IMR-90 (cell line): ENCODE measurements at regions of chr17 and their contacts with region 1.

Region 1: DNA sequence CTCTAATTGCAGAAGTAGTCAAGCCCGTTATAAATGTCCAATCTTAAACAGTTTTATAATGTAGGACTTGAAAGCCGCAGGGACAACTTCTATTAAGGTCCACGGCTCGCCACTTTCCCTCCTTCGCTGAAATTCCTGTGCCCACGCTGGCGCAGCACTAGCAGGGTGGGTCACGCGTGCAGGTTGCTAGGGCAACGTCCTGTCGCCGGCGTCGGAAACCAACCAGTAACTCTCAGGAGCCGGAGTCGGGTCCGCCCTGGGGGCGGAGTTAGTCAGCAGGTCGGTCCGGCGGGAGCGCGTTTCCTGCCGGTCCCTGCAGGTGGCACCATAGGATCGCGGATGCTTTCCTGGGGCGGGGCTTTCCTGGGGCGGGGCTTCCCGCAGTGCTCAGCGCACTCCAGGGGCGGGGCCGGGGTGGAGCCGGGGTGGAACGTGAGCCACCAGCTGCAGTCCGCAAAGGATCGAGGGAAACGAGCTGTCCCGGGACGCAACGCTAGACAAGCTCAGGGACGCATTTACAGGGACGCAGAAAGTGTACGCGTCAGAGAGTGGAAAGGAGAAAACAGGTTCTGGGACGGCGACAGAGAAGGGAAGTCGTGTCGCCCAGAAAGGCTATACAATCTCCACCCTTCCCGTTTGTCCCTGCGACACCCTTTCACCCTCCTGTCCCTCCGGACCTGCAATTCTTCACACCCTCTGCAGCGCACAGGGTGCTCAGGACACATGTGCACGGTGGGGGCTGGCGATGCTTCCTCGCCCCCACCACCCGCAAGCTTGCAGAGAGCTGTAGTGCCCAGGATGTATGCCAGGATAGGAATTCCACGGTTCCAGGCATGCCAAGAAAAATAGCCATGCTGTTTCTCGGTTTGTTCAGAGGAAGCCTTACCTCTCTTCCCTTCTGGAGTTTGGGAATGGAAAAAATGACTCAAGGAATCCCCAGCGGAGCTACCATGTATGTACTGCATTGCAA is 12.4 kb downstream of the COPZ2 start:
- DNase-seq: peak; percentile 96
- ATAC-seq: peak; percentile 92
- H3K4me3 ChIP-seq: peak overlapping the region; percentile 43
- H3K27ac ChIP-seq: peak overlapping the region; percentile 14; the same call in 1 of the 2 replicates
- H3K4me1 ChIP-seq: peaks cover 18% of the 10 kb centered on the region
- H3K27me3 ChIP-seq: no peaks in the 10 kb centered on the region
- CTCF ChIP-seq: peak; percentile 93
- POLR2A ChIP-seq: no peak
- RAD21 ChIP-seq: peak; percentile 90

Region 2: DNA sequence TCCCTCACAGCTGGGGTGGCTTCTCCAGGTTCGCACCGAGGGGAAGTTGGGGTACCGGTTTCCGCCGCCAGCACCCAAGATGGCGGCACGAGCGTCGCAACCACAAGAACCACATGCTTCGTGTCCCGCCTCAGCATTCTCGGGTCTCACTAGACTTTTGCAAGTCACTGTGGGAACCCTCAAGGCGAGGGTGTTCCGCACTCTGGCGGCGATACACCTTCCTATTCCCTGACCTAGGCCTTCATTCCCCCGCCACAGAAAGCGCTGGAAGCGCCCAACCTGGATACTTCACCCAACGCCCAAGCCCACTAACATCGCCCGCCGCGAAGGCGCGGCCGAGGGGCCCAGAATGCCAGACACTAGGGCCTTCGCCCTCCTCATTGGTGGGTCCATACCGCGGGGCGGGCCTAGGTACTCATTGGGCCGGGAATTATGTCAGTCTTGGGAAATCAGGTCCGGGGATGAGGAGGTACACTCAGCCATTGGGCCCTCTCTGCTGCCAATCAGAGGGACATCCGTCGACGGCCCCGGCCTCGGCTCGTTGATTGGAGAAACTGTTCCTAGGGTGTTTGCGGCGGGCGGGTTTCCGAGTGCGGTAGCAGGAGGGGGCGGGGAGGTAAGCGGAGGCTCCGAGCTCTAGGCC is 22.6 kb after region 1 on chr17 and contains the start of gene NFE2L1:
- CTCF ChIA-PET with region 1: interaction called, 11 read pairs
- POLR2A ChIA-PET with region 1: no interaction called
- dilution Hi-C with region 1: no loop called
- in situ Hi-C with region 1: no loop called
- intact Hi-C with region 1: loop called (anchors 1 kb)
- DNase-seq: peak; percentile 100
- ATAC-seq: peak; percentile 91
- H3K4me3 ChIP-seq: peak within 1 kb of the TSS; percentile 86
- H3K27ac ChIP-seq: peak within 1 kb of the TSS; percentile 98
- H3K4me1 ChIP-seq: peaks cover 24% of the 10 kb centered on the region
- H3K27me3 ChIP-seq: no peaks in the 10 kb centered on the region
- CTCF ChIP-seq: no peak
- POLR2A ChIP-seq: peak; percentile 90
- RAD21 ChIP-seq: no peak
- total RNA-seq, gene NFE2L1: 35.6 and 42.8 TPM in 2 replicates

Region 3: DNA sequence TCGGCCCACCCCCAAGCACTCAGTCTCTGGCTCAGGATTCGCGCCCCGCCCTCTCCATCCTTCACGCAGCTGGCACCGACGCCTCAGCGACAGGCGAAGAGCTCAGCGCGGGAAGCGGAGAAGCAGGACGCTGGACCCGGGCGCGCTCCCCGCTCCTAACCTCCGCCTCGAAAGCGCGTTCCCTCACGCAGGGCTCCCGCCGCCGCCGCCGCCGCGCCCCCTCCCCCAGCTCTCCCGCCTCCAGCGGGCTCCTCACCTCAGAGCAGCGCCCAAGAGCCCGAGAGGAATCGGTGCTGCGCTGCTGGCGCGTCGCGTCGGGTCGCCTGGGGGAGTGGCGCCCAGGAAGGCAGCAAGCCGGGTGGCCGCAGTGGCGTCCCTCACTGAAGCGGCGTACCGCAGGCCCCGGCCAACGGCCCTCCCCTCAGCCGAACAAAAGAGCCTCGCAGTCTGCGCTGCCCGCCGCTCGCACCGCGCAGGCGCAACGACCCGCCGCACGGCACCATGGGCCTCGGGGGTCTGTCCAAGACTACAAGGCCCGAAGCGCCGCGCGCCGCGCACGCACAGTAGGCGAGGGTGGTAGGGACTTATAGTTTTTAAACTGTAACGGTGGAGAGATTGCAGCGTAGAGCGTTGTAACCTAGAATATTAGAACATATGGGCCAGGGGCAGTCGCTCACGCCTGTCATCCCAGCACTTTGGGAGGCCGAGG is 75.9 kb after region 1 on chr17 and contains the start of gene CBX1:
- CTCF ChIA-PET with region 1: no interaction called
- POLR2A ChIA-PET with region 1: interaction called, 5 read pairs
- dilution Hi-C with region 1: no loop called
- in situ Hi-C with region 1: no loop called
- intact Hi-C with region 1: loop called (anchors 2 kb)
- DNase-seq: peak; percentile 94
- ATAC-seq: peak; percentile 96
- H3K4me3 ChIP-seq: peak within 1 kb of the TSS; percentile 90
- H3K27ac ChIP-seq: peak within 1 kb of the TSS; percentile 88
- H3K4me1 ChIP-seq: peaks cover 2% of the 10 kb centered on the region; the same call in 1 of the 2 replicates
- H3K27me3 ChIP-seq: no peaks in the 10 kb centered on the region
- CTCF ChIP-seq: no peak
- POLR2A ChIP-seq: no peak
- RAD21 ChIP-seq: no peak
- total RNA-seq, gene CBX1: 35.0 and 52.2 TPM in 2 replicates

Region 4: GRCh38 chr17:48194097-48194550 is 168.9 kb after region 1 on chr17:
- CTCF ChIA-PET with region 1: no interaction called
- POLR2A ChIA-PET with region 1: no interaction called
- dilution Hi-C with region 1: no loop called
- in situ Hi-C with region 1: no loop called
- intact Hi-C with region 1: no loop called
- DNase-seq: peak; percentile 47
- ATAC-seq: no peak
- H3K4me3 ChIP-seq: no peak overlapping the region
- H3K27ac ChIP-seq: no peak overlapping the region
- H3K4me1 ChIP-seq: no peaks in the 10 kb centered on the region
- H3K27me3 ChIP-seq: peaks cover 29% of the 10 kb centered on the region
- CTCF ChIP-seq: no peak
- POLR2A ChIP-seq: no peak
- RAD21 ChIP-seq: no peak

Region 5: DNA sequence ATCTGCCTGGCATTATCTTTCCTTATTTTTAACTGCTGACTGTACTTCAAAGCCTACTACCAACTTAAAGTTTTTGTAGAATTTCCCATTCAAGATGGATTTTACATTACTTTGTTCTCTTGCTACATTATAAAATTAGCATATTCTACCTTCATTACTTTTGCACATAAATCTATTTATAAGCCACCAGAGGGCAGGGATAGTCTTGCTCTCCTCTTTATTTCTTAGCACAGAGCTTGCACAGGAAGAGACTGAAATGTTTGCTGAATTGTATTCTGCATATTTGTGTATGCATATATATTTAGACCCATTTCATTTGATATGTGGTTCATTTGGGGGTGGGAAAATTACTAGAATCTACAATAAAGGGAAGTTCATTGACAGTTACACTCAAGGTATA is 296.8 kb after region 1 on chr17:
- CTCF ChIA-PET with region 1: no interaction called
- POLR2A ChIA-PET with region 1: no interaction called
- dilution Hi-C with region 1: no loop called
- in situ Hi-C with region 1: no loop called
- intact Hi-C with region 1: no loop called
- DNase-seq: peak; percentile 29
- ATAC-seq: no peak
- H3K4me3 ChIP-seq: no peak overlapping the region
- H3K27ac ChIP-seq: no peak overlapping the region
- H3K4me1 ChIP-seq: no peaks in the 10 kb centered on the region
- H3K27me3 ChIP-seq: peaks cover 39% of the 10 kb centered on the region
- CTCF ChIP-seq: peak; percentile 28
- POLR2A ChIP-seq: no peak
- RAD21 ChIP-seq: peak; percentile 36

Region 6: DNA sequence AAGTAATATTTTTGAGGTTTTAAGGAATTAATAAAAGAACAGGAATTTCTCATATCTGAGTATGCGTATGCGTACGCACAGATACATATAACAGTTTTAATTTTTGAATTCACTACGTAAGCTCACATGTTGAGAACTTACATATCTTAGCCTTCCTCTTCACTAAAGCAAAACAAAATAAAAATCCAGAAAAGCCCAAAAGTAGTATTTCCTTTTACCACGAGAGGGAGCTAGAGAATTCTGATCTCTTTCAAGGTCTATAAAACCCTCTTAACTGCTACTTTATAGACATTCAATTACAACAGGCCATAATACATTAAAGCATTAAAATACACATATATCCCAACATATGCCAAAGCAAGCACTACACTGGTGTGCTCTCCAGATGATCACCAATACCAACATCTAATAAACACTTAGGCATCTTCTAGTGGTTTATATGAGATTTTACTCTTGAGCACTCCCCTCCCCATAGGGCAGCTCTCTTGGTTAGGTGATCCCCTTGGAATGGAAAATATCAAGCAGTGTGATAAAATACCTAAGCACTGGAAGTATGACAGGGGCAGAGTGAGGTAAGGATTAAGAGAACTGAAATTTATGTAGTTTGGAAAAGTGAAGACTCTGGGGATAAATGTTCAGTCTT is 310.8 kb after region 1 on chr17:
- CTCF ChIA-PET with region 1: no interaction called
- POLR2A ChIA-PET with region 1: no interaction called
- dilution Hi-C with region 1: no loop called
- in situ Hi-C with region 1: no loop called
- intact Hi-C with region 1: loop called (anchors 10 kb)
- DNase-seq: peak; percentile 71
- ATAC-seq: peak; percentile 74
- H3K4me3 ChIP-seq: no peak overlapping the region
- H3K27ac ChIP-seq: no peak overlapping the region
- H3K4me1 ChIP-seq: 0 out of 2 replicates have a peak, but pooled peaks cover 1% of the 10 kb centered on the region
- H3K27me3 ChIP-seq: peaks cover 40% of the 10 kb centered on the region
- CTCF ChIP-seq: peak; percentile 82
- POLR2A ChIP-seq: no peak
- RAD21 ChIP-seq: peak; percentile 73

Region 7: GRCh38 chr17:48618256-48618897 is 593.2 kb after region 1 on chr17:
- CTCF ChIA-PET with region 1: interaction called, 4 read pairs
- POLR2A ChIA-PET with region 1: no interaction called
- dilution Hi-C with region 1: no loop called
- in situ Hi-C with region 1: no loop called
- intact Hi-C with region 1: loop called (anchors 1 kb)
- DNase-seq: peak; percentile 79
- ATAC-seq: peak; percentile 93
- H3K4me3 ChIP-seq: no peak overlapping the region
- H3K27ac ChIP-seq: no peak overlapping the region
- H3K4me1 ChIP-seq: no peaks in the 10 kb centered on the region; the same call in 1 of the 2 replicates
- H3K27me3 ChIP-seq: peaks cover 79% of the 10 kb centered on the region
- CTCF ChIP-seq: peak; percentile 98
- POLR2A ChIP-seq: peak; percentile 57; the same call in 1 of the 2 replicates
- RAD21 ChIP-seq: peak; percentile 97